Aorta (tissue), 5 donors: ENCODE measurements at regions of chr16 and their contacts with region 1.

Region 1: GRCh38 chr16:56057151-56057550 is 134.1 kb upstream of the GNAO1 start:
- DNase-seq: no peak
- ATAC-seq: no peak
- H3K4me3 ChIP-seq: no peak overlapping the region
- H3K27ac ChIP-seq: no peak overlapping the region
- H3K4me1 ChIP-seq: no peaks in the 10 kb centered on the region
- H3K27me3 ChIP-seq: no peaks in the 10 kb centered on the region

Region 2: GRCh38 chr16:56081371-56081770 is 24.2 kb after region 1 on chr16:
- intact Hi-C with region 1: loop called in 1 of 2 experiments (anchors 2 kb)
- DNase-seq: no peak
- ATAC-seq: no peak
- H3K4me3 ChIP-seq: no peak overlapping the region
- H3K27ac ChIP-seq: no peak overlapping the region
- H3K4me1 ChIP-seq: no peaks in the 10 kb centered on the region
- H3K27me3 ChIP-seq: no peaks in the 10 kb centered on the region